A549 (cell line): ENCODE measurements at regions of chr6 and their contacts with region 1.

Region 1: DNA sequence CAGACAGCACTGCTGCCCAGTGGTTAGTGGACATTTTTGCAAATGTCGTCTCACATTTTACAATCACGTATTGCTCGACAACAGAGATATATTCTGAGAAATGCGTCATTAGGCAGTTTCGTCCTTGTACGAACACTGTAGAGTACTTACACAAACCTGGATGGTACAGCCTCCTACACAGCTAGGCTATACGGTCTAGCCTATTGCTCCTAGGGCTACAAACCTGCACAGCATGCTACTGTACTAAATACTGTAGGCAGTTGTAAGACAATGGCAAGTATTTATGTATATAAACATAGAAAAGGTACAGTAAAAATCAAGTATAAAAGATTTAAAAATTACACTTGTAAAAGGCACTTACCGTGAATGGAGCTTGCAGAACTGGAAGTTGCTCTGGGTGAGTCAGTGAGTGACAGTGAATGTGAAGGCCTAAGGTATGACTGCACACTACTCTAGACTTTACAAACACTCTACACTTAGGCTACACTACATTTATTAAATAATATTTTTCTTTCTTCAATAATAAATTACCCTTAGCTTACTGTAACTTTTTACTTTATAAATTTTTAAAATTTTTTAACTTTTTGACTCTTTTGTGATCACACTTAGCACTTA is 43.1 kb downstream of the ALDH5A1 start:
- DNase-seq: no peak
- ATAC-seq: peak in 1 of 2 experiments; percentile 43; a peak in 1 of 6 replicates
- H3K4me3 ChIP-seq: no peak overlapping the region
- H3K27ac ChIP-seq: no peak overlapping the region
- H3K4me1 ChIP-seq: no peaks in the 10 kb centered on the region
- CTCF ChIP-seq: no peak
- EP300 ChIP-seq: no peak
- POLR2A ChIP-seq: no peak
- RAD21 ChIP-seq: no peak

Region 2: DNA sequence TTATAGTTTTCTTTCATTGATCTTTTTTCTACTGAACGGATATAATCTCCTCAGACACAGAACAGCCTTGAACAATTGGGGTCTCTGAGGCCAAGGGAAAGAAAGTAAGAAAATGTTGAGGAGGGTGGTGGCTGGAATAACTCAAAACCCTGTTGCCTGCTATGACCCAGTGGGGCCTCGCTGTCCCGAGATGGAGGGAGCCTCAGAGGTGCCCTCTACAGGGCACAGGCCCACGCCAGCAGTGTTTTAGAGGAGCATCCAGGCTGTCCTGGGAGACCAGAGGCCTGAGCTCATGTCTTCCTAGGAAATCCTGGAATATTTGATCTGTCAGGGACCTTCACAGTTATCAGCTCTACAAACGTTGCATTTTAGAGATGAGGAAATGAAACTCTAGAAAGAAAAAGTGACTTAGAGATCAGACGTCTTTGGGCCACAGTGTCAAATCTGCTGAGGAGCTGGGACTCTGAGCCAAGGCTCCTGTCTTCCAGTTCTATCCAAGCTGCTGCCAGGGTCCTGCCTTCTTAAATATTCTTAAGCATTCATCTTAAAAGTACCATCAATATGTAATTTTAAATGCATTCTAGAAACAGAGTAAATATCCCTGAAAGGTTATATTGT is 16.8 kb before region 1 on chr6:
- CTCF ChIA-PET with region 1: interaction called, 24 read pairs
- POLR2A ChIA-PET with region 1: no interaction called
- DNase-seq: peak; percentile 48 to 63
- ATAC-seq: peak; percentile 99
- H3K4me3 ChIP-seq: no peak overlapping the region
- H3K27ac ChIP-seq: no peak overlapping the region
- H3K4me1 ChIP-seq: no peaks in the 10 kb centered on the region
- CTCF ChIP-seq: peak; percentile 50
- EP300 ChIP-seq: no peak
- POLR2A ChIP-seq: no peak
- RAD21 ChIP-seq: peak; percentile 37 to 38; a peak in 3 of 5 replicates

Region 3: GRCh38 chr6:24558516-24558915 is 20.6 kb after region 1 on chr6:
- CTCF ChIA-PET with region 1: no interaction called
- POLR2A ChIA-PET with region 1: no interaction called
- DNase-seq: no peak
- ATAC-seq: no peak
- H3K4me3 ChIP-seq: no peak overlapping the region
- H3K27ac ChIP-seq: no peak overlapping the region
- H3K4me1 ChIP-seq: no peaks in the 10 kb centered on the region
- CTCF ChIP-seq: no peak
- EP300 ChIP-seq: no peak
- POLR2A ChIP-seq: no peak
- RAD21 ChIP-seq: no peak

Region 4: DNA sequence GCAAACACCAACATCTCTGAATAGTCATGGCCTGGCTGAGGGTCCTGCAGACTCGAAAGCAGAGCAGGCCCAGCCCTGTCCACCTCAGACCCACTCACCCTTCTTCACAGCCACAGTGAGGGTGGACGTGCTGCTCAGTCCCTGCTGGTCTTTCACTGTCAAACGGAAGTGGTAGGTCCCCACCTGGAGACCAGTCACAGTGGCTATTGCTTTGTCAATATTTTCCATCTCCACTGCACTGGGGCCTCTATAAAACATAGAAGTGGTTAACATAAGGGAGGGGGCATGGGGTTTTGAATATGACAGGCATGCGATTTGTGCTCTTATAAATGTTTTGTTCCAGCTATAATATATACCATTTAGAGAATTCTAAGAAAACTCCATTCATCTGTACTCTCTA is 30.8 kb after region 1 on chr6:
- CTCF ChIA-PET with region 1: no interaction called
- POLR2A ChIA-PET with region 1: no interaction called
- DNase-seq: no peak
- ATAC-seq: no peak
- H3K4me3 ChIP-seq: no peak overlapping the region
- H3K27ac ChIP-seq: no peak overlapping the region
- H3K4me1 ChIP-seq: no peaks in the 10 kb centered on the region
- CTCF ChIP-seq: no peak
- EP300 ChIP-seq: no peak
- POLR2A ChIP-seq: no peak
- RAD21 ChIP-seq: no peak